Caco-2 (cell line): ENCODE measurements at regions of chr11 and their contacts with region 1.

Region 1: DNA sequence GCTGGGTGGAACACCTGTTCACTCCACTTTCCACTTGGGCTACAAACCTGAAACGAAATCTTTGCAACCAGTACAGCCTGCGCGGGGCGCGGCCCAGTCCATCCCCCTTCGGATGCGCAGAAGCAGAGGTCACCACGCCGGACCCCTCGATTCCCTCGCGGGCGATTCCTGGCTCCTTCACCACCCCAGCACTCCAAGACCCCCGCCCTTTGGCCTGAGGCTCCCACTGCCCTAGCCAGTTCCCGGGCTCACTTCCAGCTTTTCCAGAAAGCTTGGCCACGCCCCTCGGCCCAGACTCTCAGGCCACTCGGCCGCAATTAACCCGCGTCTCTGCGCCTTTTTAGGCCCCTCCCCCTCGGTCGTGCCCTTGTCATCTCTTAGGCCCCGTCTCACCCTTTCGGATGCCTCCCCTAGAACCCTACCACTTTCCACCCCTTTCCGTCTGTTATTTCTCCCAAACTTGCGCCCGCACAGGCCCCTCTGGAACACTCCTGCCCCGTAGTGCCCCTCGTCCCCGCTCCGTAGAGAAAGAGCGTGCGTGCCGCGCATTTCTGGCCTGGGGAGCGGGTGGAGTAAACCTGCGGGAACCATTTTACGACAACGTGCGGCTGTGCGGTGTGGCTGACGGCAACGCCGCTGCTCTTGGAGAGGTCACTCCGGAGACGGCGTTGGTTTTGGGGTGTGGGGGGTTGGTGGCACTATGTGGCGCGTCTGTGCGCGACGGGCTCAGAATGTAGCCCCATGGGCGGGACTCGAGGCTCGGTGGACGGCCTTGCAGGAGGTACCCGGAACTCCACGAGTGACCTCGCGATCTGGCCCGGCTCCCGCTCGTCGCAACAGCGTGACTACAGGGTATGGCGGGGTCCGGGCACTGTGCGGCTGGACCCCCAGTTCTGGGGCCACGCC is at the start of gene DLAT:
- DNase-seq: peak; percentile 97 to 99
- H3K4me3 ChIP-seq: peak within 1 kb of the TSS; percentile 79
- H3K4me3 Mint-ChIP-seq: peak within 1 kb of the TSS; percentile 94
- H3K27ac Mint-ChIP-seq: peak within 1 kb of the TSS; percentile 98
- H3K4me1 ChIP-seq: no peaks in the 10 kb centered on the region; the same call in 1 of the 2 replicates
- H3K4me1 Mint-ChIP-seq: peaks cover 17% of the 10 kb centered on the region
- H3K27me3 ChIP-seq: no peaks in the 10 kb centered on the region
- H3K27me3 Mint-ChIP-seq: no peaks in the 10 kb centered on the region
- CTCF ChIP-seq: no peak
- total RNA-seq, gene DLAT: 99.3 and 100.0 TPM in 2 replicates

Region 2: GRCh38 chr11:111642542-111642941 is 382.5 kb before region 1 on chr11:
- CTCF ChIA-PET with region 1: no interaction called
- POLR2A ChIA-PET with region 1: no interaction called
- intact Hi-C with region 1: no loop called
- DNase-seq: no peak
- H3K4me3 ChIP-seq: no peak overlapping the region
- H3K4me3 Mint-ChIP-seq: no peak overlapping the region
- H3K27ac Mint-ChIP-seq: no peak overlapping the region
- H3K4me1 ChIP-seq: peaks cover 20% of the 10 kb centered on the region
- H3K4me1 Mint-ChIP-seq: peaks cover 17% of the 10 kb centered on the region
- H3K27me3 ChIP-seq: no peaks in the 10 kb centered on the region
- H3K27me3 Mint-ChIP-seq: no peaks in the 10 kb centered on the region
- CTCF ChIP-seq: no peak

Region 3: GRCh38 chr11:111808063-111808588 is 216.9 kb before region 1 on chr11:
- CTCF ChIA-PET with region 1: no interaction called
- POLR2A ChIA-PET with region 1: no interaction called
- intact Hi-C with region 1: no loop called
- DNase-seq: no peak
- H3K4me3 ChIP-seq: no peak overlapping the region
- H3K4me3 Mint-ChIP-seq: no peak overlapping the region
- H3K27ac Mint-ChIP-seq: no peak overlapping the region
- H3K4me1 ChIP-seq: peaks cover 7% of the 10 kb centered on the region
- H3K4me1 Mint-ChIP-seq: peaks cover 17% of the 10 kb centered on the region
- H3K27me3 ChIP-seq: no peaks in the 10 kb centered on the region
- H3K27me3 Mint-ChIP-seq: no peaks in the 10 kb centered on the region
- CTCF ChIP-seq: no peak

Region 4: GRCh38 chr11:111878849-111879636 is 146.0 kb before region 1 on chr11 and contains the starts of genes CFAP68 and FDXACB1:
- CTCF ChIA-PET with region 1: interaction called, 3 read pairs
- POLR2A ChIA-PET with region 1: interaction called, 3 read pairs
- intact Hi-C with region 1: loop called (anchors 1 kb)
- DNase-seq: peak; percentile 100
- H3K4me3 ChIP-seq: peak within 1 kb of the TSS; percentile 51
- H3K4me3 Mint-ChIP-seq: peak within 1 kb of the TSS; percentile 86
- H3K27ac Mint-ChIP-seq: peak within 1 kb of the TSS; percentile 97
- H3K4me1 ChIP-seq: peaks cover 6% of the 10 kb centered on the region; the same call in 1 of the 2 replicates
- H3K4me1 Mint-ChIP-seq: peaks cover 8% of the 10 kb centered on the region
- H3K27me3 ChIP-seq: no peaks in the 10 kb centered on the region
- H3K27me3 Mint-ChIP-seq: no peaks in the 10 kb centered on the region
- CTCF ChIP-seq: peak; percentile 99
- total RNA-seq, gene CFAP68: 69.8 and 71.4 TPM in 2 replicates
- total RNA-seq, gene FDXACB1: 4.3 and 4.7 TPM in 2 replicates

Region 5: DNA sequence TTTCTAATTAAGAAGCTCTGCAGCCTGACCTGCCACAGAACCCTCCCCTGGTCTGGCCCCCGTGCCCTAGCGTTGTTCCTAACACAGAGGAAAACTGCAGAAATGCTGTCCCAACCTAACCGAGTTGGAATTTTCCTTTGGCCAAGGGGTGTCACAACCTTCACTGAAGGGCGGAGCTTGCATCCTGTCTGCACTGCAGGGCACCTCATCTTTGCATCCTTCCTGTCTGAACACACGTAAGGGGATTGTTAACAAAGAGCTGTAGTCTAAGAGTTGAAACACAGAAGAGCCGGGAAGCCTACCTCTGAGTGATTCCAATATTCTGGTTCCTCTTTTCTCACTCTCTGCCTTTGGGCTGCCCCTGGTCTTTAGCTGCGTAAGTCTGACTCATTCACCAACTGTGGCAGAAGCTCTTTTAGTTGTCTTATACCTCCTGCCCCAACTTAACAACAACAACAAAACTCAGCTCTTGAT is 86.3 kb before region 1 on chr11:
- CTCF ChIA-PET with region 1: interaction called, 5 read pairs
- POLR2A ChIA-PET with region 1: no interaction called
- intact Hi-C with region 1: loop called (anchors 2 kb)
- DNase-seq: no peak
- H3K4me3 ChIP-seq: no peak overlapping the region
- H3K4me3 Mint-ChIP-seq: peak overlapping the region; percentile 77
- H3K27ac Mint-ChIP-seq: no peak overlapping the region
- H3K4me1 ChIP-seq: peaks cover 18% of the 10 kb centered on the region
- H3K4me1 Mint-ChIP-seq: peaks cover 15% of the 10 kb centered on the region
- H3K27me3 ChIP-seq: no peaks in the 10 kb centered on the region
- H3K27me3 Mint-ChIP-seq: no peaks in the 10 kb centered on the region
- CTCF ChIP-seq: no peak

Region 6: DNA sequence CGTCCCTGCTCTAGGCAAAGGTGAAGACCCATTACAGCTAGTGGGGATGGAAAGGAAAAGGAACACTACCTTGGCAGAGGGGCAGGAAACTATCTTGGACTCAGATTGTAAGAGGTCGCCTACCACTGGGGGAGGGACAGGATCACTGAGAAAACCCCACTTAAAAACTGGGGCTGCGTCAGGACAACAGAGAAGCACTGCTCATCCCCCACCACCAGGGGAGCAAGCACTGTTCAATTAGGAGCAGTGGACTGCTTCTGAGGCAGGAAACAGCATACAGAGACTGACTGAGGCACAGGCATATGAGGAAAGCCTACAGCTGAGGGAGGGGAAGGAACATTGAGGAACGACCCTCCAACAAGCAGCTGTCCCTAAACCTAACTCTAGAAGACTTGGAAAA is 20.6 kb before region 1 on chr11:
- CTCF ChIA-PET with region 1: interaction called, 5 read pairs
- POLR2A ChIA-PET with region 1: no interaction called
- intact Hi-C with region 1: loop called (anchors 1 kb)
- DNase-seq: peak; percentile 59 to 73
- H3K4me3 ChIP-seq: no peak overlapping the region
- H3K4me3 Mint-ChIP-seq: no peak overlapping the region
- H3K27ac Mint-ChIP-seq: no peak overlapping the region
- H3K4me1 ChIP-seq: peaks cover 12% of the 10 kb centered on the region
- H3K4me1 Mint-ChIP-seq: peaks cover 10% of the 10 kb centered on the region
- H3K27me3 ChIP-seq: no peaks in the 10 kb centered on the region
- H3K27me3 Mint-ChIP-seq: no peaks in the 10 kb centered on the region
- CTCF ChIP-seq: peak; percentile 79 to 83

Region 7: GRCh38 chr11:112200252-112200651 is 175.2 kb after region 1 on chr11:
- CTCF ChIA-PET with region 1: no interaction called
- POLR2A ChIA-PET with region 1: no interaction called
- intact Hi-C with region 1: no loop called
- DNase-seq: no peak
- H3K4me3 ChIP-seq: no peak overlapping the region
- H3K4me3 Mint-ChIP-seq: no peak overlapping the region
- H3K27ac Mint-ChIP-seq: no peak overlapping the region
- H3K4me1 ChIP-seq: peaks cover 9% of the 10 kb centered on the region; the same call in 1 of the 2 replicates
- H3K4me1 Mint-ChIP-seq: no peaks in the 10 kb centered on the region
- H3K27me3 ChIP-seq: no peaks in the 10 kb centered on the region
- H3K27me3 Mint-ChIP-seq: peaks cover 2% of the 10 kb centered on the region
- CTCF ChIP-seq: no peak

Region 8: DNA sequence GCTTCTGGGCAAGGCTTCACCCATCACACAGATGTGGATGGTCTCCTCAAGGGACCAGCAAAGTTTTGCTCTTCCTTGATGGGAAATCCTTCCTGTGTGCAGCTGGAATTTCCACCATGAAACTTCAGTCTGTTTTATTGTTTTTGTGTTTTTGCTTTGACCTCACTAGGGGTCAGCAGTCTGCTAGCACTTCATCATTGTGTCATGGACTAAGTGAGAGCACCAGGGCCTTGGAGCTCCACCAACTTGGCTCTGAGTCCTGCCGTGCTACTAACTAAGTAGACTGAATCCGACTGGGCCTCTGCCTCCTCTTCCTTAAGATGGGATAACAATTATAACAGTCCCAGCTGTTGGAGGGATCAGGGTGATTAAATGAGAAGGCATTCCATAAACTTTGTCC is 630.3 kb after region 1 on chr11:
- CTCF ChIA-PET with region 1: no interaction called
- POLR2A ChIA-PET with region 1: no interaction called
- intact Hi-C with region 1: no loop called
- DNase-seq: no peak
- H3K4me3 ChIP-seq: no peak overlapping the region
- H3K4me3 Mint-ChIP-seq: no peak overlapping the region
- H3K27ac Mint-ChIP-seq: no peak overlapping the region
- H3K4me1 ChIP-seq: no peaks in the 10 kb centered on the region
- H3K4me1 Mint-ChIP-seq: no peaks in the 10 kb centered on the region
- H3K27me3 ChIP-seq: no peaks in the 10 kb centered on the region; the same call in 1 of the 2 replicates
- H3K27me3 Mint-ChIP-seq: peaks cover 13% of the 10 kb centered on the region
- CTCF ChIP-seq: peak in 1 of 2 experiments; percentile 3

Region 9: DNA sequence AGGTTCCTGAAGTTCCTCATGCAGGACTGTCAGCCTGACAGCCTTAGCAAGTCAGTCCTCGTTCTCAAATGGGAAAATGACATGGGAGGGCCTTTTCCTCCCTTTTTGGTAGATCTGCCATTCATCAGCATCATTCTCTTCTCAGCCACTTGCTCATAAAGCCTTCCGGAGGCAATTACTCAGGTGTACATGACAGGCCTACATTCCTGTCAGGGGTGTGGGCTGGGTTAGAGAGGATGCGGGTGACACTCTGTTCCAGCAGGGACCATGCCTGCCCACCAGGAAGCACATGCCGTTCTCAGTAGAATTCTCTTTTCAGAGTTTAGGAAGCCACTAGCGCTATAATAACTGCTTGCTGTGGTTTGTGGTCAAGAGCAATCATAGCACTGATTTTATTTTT is 1338.4 kb after region 1 on chr11:
- CTCF ChIA-PET with region 1: no interaction called
- POLR2A ChIA-PET with region 1: interaction called, 10 read pairs
- intact Hi-C with region 1: no loop called
- DNase-seq: no peak
- H3K4me3 ChIP-seq: no peak overlapping the region
- H3K4me3 Mint-ChIP-seq: no peak overlapping the region
- H3K27ac Mint-ChIP-seq: no peak overlapping the region
- H3K4me1 ChIP-seq: no peaks in the 10 kb centered on the region
- H3K4me1 Mint-ChIP-seq: no peaks in the 10 kb centered on the region
- H3K27me3 ChIP-seq: no peaks in the 10 kb centered on the region
- H3K27me3 Mint-ChIP-seq: no peaks in the 10 kb centered on the region
- CTCF ChIP-seq: no peak